ENCODE measurements at regions of chr4 and their contacts with region 1.

Region 1: GRCh38 chr4:183362916-183363542 is 40.8 kb upstream of the CLDN24 start:
- DNase-seq: peak; percentile 14
- ATAC-seq: peak; percentile 49
- H3K4me3 ChIP-seq: no peak overlapping the region
- H3K27ac ChIP-seq: no peak overlapping the region
- H3K4me1 ChIP-seq: peaks cover 33% of the 10 kb centered on the region
- H3K27me3 ChIP-seq: no peaks in the 10 kb centered on the region
- CTCF ChIP-seq: peak; percentile 59
- EP300 ChIP-seq: no peak
- POLR2A ChIP-seq: no peak
- RAD21 ChIP-seq: peak; percentile 25; the same call in 1 of the 2 replicates

Region 2: GRCh38 chr4:183398227-183399125 is 35.4 kb after region 1 on chr4:
- CTCF ChIA-PET with region 1: no interaction called
- POLR2A ChIA-PET with region 1: no interaction called
- in situ Hi-C with region 1: no loop called
- intact Hi-C with region 1: loop called (anchors 5 kb)
- DNase-seq: peak; percentile 51
- ATAC-seq: peak; percentile 97
- H3K4me3 ChIP-seq: peak overlapping the region; percentile 38 to 71 (median 50)
- H3K27ac ChIP-seq: no peak overlapping the region
- H3K4me1 ChIP-seq: peaks cover 17% of the 10 kb centered on the region
- H3K27me3 ChIP-seq: peaks cover 4 to 32% of the 10 kb centered on the region in 2 experiments; a peak in 4 of 5 replicates
- CTCF ChIP-seq: peak; percentile 76
- EP300 ChIP-seq: no peak
- POLR2A ChIP-seq: no peak
- RAD21 ChIP-seq: peak; percentile 62; the same call in 1 of the 2 replicates

Region 3: DNA sequence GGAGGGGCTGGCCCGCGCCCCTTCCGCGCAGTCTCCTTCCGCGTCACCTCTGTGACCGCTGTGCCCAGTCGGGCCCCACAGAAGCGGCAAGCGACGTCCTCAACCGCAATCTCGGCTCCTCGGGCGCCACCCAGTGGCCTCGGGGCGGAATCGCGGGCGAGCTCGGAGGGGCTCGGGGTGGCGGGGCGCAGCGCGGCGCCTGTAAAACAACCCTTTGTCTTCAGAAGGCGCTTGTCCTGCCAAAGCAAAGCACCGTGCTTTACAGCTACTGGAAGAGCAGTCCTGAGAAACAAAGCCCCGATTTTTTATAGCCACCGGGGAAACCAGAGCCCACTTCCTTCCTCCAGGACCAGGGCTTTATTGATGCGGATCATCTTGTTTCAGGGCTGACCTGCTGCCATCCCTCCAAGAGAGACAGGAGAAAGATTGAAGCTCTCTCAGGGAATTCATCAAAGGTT is 44.1 kb after region 1 on chr4:
- CTCF ChIA-PET with region 1: no interaction called
- POLR2A ChIA-PET with region 1: no interaction called
- in situ Hi-C with region 1: no loop called
- intact Hi-C with region 1: loop called (anchors 2 kb)
- DNase-seq: peak; percentile 60
- ATAC-seq: peak; percentile 87
- H3K4me3 ChIP-seq: peak overlapping the region; percentile 34 to 63 (median 57); a peak in 5 of 6 replicates
- H3K27ac ChIP-seq: no peak overlapping the region
- H3K4me1 ChIP-seq: peaks cover 42% of the 10 kb centered on the region
- H3K27me3 ChIP-seq: peaks cover 1 to 10% of the 10 kb centered on the region in 2 experiments; a peak in 2 of 5 replicates
- CTCF ChIP-seq: peak; percentile 96
- EP300 ChIP-seq: no peak
- POLR2A ChIP-seq: no peak
- RAD21 ChIP-seq: peak; percentile 90